Mammary epithelial cell (primary cell): ENCODE measurements at regions of chr3 and their contacts with region 1.

Region 1: DNA sequence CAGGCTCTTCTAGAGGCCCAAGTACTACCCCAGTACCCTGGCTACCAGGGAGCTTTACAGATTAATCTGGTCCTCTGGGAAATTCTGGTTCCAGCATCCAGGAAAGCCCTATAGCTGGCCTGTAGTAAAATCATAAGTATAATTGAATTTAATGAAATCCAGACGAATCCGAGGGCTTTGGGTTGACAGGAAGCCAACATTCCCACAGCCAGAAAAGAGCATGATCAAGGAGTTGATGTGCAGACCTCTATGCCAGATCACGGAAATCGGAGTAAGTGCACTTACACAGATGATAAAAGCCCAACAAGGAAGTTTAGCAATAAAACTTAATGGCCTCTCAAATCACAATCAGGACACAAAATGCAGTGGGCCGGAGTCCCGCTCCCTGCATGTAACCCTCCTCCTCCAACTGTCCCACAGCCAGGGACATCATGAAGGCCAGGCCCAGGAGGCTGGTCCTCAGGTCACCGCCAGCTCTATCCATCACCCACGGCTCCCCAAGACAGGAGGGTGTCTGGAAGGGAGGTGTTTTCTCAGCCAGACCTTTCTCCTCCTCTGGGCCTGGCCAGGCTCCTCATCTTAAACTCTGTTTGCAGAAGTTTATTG is 62.8 kb upstream of the SEC22A start:
- DNase-seq: no peak
- H3K4me3 ChIP-seq: no peak overlapping the region
- H3K27ac ChIP-seq: no peak overlapping the region
- H3K4me1 ChIP-seq: no peaks in the 10 kb centered on the region
- H3K27me3 ChIP-seq: no peaks in the 10 kb centered on the region
- CTCF ChIP-seq: no peak

Region 2: GRCh38 chr3:123112232-123112631 is 26.7 kb before region 1 on chr3:
- CTCF ChIA-PET with region 1: interaction called, 15 read pairs
- dilution Hi-C with region 1: no loop called
- in situ Hi-C with region 1: no loop called
- intact Hi-C with region 1: no loop called
- DNase-seq: no peak
- H3K4me3 ChIP-seq: no peak overlapping the region
- H3K27ac ChIP-seq: no peak overlapping the region
- H3K4me1 ChIP-seq: no peaks in the 10 kb centered on the region
- H3K27me3 ChIP-seq: no peaks in the 10 kb centered on the region
- CTCF ChIP-seq: no peak

Region 3: DNA sequence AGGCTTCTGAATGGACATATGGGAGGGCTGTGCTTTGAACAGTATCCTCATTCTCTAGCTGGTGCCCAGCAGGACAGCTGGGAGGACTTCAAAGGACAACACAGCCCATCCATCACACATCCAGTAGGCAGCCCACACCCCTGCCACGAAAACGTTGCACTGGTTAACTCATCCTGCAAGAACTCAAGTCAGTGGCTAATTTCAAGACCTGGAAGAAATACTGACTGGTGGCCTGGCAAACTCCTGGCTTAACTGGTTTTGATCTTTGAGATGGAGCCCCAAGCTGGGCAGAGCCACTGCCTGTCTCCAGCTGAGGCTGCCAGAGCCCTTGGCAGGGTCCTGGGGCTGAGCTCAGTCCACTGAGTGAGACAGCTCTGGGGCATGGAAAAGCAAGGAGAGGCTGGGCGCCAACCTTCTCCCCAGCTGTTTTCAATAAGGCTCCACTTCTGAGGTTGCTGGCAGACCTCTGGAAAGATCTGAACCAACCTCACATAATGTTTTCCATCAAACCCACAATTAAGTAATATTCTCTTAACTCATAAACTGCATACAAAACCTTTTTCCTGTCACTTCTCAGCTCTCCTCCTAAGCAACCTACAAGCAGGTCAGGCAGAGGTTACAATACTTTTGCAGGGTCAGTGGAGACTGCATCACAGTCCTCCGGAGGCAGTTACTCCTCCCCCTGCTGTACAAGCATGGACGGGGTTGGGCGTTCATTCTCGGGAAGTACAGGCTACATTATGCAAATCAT is 634.9 kb after region 1 on chr3:
- CTCF ChIA-PET with region 1: no interaction called
- dilution Hi-C with region 1: no loop called
- in situ Hi-C with region 1: no loop called
- intact Hi-C with region 1: no loop called
- DNase-seq: no peak
- H3K4me3 ChIP-seq: no peak overlapping the region
- H3K27ac ChIP-seq: no peak overlapping the region
- H3K4me1 ChIP-seq: peaks cover 11% of the 10 kb centered on the region
- H3K27me3 ChIP-seq: no peaks in the 10 kb centered on the region
- CTCF ChIP-seq: no peak